ENCODE measurements at regions of chr13 and their contacts with region 1.

Region 1: DNA sequence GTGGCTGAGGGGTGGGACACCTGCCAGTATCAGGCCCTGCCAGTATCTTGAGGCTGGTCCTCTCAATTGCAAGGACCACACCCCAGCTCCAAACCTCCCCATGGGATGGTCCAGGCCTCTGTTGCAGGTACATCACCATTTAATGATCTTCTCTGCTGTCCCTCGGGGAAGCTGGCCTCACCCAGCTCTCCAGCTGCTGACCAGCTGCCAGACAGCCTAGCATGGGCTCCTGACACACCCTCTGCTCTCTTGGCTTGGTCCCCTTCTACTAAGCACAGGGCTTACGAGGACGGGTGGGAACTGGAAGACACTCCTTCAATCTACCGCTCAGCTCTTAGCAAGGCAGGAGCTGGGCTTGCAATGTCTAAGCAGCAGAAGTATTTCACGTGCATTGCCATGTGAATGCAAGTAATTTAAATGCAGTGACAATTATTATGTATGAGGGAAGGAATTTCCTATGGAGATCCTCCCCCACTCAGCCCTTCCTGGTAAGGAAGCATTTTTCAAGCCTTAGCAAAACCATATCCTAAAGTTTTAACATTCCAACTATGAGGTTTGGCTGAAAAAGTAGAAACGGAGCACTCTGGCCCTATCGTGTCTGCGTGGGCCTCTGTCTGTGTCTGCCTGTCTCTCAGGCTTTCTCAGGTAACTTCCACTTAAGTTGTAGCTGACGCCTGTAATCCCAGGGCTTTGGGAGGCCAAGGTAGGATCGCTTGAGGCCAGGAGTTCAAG is 63.8 kb downstream of the LATS2 start:
- DNase-seq: no peak
- H3K4me3 ChIP-seq: no peak overlapping the region
- H3K4me3 Mint-ChIP-seq: no peak overlapping the region
- H3K27ac Mint-ChIP-seq: peak overlapping the region; percentile 48
- H3K4me1 ChIP-seq: peaks cover 12% of the 10 kb centered on the region
- H3K4me1 Mint-ChIP-seq: peaks cover 8% of the 10 kb centered on the region
- H3K27me3 ChIP-seq: no peaks in the 10 kb centered on the region; the same call in 1 of the 2 replicates
- H3K27me3 Mint-ChIP-seq: no peaks in the 10 kb centered on the region
- CTCF ChIP-seq: no peak

Region 2: DNA sequence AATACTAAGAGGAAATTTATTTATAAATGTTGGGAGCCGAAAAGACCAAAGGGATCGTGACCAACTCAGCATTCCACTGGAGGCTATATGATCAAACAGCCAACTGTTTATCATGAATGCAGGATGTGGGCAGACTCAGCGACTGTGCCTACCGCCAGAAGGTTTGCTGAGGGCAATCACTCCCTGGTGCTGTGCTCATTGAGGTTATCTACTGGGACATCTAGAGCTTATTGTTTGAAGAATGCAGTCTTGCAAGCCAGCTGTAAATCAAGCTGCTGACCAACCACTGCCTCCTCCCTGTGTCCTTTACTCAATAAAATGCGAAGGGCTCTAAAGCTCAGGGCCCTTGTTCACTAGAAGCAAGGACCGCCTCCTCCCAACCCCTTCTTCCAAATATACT is 86.6 kb before region 1 on chr13:
- CTCF ChIA-PET with region 1: no interaction called
- POLR2A ChIA-PET with region 1: no interaction called
- intact Hi-C with region 1: no loop called
- DNase-seq: peak in 1 of 2 experiments; percentile 21
- H3K4me3 ChIP-seq: no peak overlapping the region
- H3K4me3 Mint-ChIP-seq: no peak overlapping the region
- H3K27ac Mint-ChIP-seq: no peak overlapping the region
- H3K4me1 ChIP-seq: no peaks in the 10 kb centered on the region
- H3K4me1 Mint-ChIP-seq: peaks cover 9% of the 10 kb centered on the region
- H3K27me3 ChIP-seq: no peaks in the 10 kb centered on the region
- H3K27me3 Mint-ChIP-seq: no peaks in the 10 kb centered on the region
- CTCF ChIP-seq: no peak

Region 3: GRCh38 chr13:20945952-20946383 is 51.6 kb before region 1 on chr13:
- CTCF ChIA-PET with region 1: interaction called, 3 read pairs
- POLR2A ChIA-PET with region 1: no interaction called
- intact Hi-C with region 1: loop called (anchors 10 kb)
- DNase-seq: no peak
- H3K4me3 ChIP-seq: no peak overlapping the region
- H3K4me3 Mint-ChIP-seq: no peak overlapping the region
- H3K27ac Mint-ChIP-seq: no peak overlapping the region
- H3K4me1 ChIP-seq: peaks cover 22% of the 10 kb centered on the region
- H3K4me1 Mint-ChIP-seq: peaks cover 30% of the 10 kb centered on the region
- H3K27me3 ChIP-seq: no peaks in the 10 kb centered on the region
- H3K27me3 Mint-ChIP-seq: no peaks in the 10 kb centered on the region
- CTCF ChIP-seq: no peak